PC-9 (cell line): ENCODE measurements at regions of chr4 and their contacts with region 1.

Region 1: GRCh38 chr4:186037692-186038658 is 31.0 kb upstream of the TLR3 start:
- DNase-seq: peak; percentile 40 to 65
- H3K4me3 ChIP-seq: no peak overlapping the region
- H3K27ac ChIP-seq: no peak overlapping the region
- H3K4me1 ChIP-seq: no peaks in the 10 kb centered on the region
- H3K27me3 ChIP-seq: no peaks in the 10 kb centered on the region
- CTCF ChIP-seq: peak; percentile 80

Region 2: DNA sequence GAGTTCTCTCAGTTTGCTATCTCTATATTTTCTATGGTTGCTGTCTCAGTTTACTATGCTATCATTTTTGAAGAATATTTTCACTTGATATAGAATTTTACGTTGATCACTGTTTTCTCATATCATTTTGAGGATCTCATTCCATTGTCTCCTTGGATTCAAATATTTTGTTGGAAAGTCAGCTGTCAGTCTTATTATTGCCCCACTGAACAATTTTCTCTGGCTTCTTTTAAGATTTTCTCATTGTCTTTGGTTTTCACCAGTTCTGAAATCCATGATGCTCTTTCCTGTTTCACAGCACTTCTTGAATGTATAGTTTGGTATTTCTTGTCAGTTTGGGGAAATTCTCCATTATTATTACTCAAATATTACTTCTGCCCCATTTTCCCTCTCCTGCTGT is 1901.5 kb before region 1 on chr4:
- CTCF ChIA-PET with region 1: no interaction called
- POLR2A ChIA-PET with region 1: no interaction called
- intact Hi-C with region 1: loop called (anchors 10 kb)
- DNase-seq: no peak
- H3K4me3 ChIP-seq: no peak overlapping the region
- H3K27ac ChIP-seq: no peak overlapping the region
- H3K4me1 ChIP-seq: no peaks in the 10 kb centered on the region
- H3K27me3 ChIP-seq: no peaks in the 10 kb centered on the region; the same call in 1 of the 2 replicates
- CTCF ChIP-seq: no peak

Region 3: DNA sequence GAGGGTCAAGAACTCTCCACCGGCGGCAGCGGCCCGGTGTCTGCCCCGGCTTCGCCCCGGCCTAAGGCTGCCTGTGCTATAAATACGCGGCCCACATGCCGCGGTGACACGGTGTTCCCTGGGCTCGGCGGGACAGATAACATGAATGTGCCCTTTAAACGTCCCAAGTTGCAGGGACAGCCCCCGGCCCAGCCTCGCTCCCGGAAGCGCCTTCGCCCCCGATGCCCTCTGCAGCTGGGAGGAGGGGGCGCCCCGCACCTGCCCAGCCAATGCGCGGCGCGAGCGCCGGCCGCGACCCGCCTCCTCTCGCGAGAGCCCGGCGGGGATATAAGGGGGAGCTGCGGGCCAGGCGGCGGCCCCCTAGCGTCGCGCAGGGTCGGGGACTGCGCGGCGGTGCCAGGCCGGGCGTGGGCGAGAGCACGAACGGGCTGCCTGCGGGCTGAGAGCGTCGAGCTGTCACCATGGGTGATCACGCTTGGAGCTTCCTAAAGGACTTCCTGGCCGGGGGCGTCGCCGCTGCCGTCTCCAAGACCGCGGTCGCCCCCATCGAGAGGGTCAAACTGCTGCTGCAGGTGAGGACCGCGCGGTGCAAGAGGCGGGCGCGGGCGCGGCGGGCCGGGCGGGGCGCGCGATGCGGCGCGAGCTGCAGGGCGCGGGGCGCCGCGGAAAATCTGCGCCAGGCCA is 894.9 kb before region 1 on chr4 and contains the start of gene SLC25A4:
- CTCF ChIA-PET with region 1: no interaction called
- POLR2A ChIA-PET with region 1: no interaction called
- intact Hi-C with region 1: loop called (anchors 10 kb)
- DNase-seq: peak; percentile 37 to 81
- H3K4me3 ChIP-seq: peak within 1 kb of the TSS; percentile 71
- H3K27ac ChIP-seq: no peak within 1 kb of the TSS
- H3K4me1 ChIP-seq: peaks cover 8% of the 10 kb centered on the region; the same call in 1 of the 2 replicates
- H3K27me3 ChIP-seq: no peaks in the 10 kb centered on the region
- CTCF ChIP-seq: no peak; the same call in 1 of the 2 replicates
- total RNA-seq, gene SLC25A4: 15.6 and 15.9 TPM in 2 replicates

Region 4: GRCh38 chr4:185183619-185184281 is 854.2 kb before region 1 on chr4:
- CTCF ChIA-PET with region 1: interaction called, 5 read pairs
- POLR2A ChIA-PET with region 1: no interaction called
- intact Hi-C with region 1: loop called (anchors 10 kb)
- DNase-seq: peak; percentile 46 to 61
- H3K4me3 ChIP-seq: no peak overlapping the region
- H3K27ac ChIP-seq: no peak overlapping the region
- H3K4me1 ChIP-seq: no peaks in the 10 kb centered on the region
- H3K27me3 ChIP-seq: no peaks in the 10 kb centered on the region
- CTCF ChIP-seq: peak; percentile 73

Region 5: DNA sequence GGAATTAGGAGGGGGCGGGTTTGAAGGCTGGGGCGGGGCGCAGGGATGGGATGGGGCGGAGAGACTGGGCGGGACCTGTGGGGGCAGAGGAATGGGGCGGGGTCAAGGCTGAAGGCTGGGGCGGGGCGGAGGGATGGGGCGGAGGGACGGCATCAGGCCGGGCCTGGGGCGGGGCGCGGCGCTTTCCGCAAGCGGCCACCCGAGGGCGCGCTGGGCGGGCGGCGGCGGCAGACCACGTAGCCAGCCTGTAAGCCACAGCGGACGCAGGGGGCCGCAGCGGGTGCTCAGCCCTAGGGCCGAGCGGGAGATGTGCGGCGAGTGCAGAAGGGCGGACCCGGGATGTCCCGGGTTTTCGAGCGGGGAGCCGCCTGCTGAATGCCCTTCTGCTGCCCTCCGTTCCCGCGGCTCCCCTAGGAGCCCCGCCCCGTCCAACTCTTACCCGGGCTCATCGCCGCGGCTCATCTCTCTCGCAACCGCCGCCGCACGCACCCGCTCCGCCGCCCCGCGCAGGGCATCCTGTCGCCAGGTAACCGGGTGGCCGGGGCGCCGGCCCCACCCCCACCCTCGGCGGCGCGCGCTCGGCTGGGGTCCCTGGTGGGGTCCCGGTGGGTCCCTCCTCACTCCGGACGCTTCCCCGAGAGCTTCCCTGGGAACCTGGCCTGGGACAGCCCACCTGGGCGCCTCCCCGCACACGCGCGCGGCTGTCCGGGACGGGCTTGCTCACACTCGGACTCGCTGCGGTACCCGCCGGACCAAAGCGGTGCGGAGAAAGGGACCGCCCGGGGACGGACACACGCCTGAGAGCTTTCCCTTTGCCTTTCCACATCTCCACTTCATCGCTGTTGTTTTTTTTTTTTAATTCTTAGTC is 566.5 kb before region 1 on chr4 and contains the start of gene CCDC110:
- CTCF ChIA-PET with region 1: no interaction called
- POLR2A ChIA-PET with region 1: no interaction called
- intact Hi-C with region 1: loop called (anchors 5 kb)
- DNase-seq: peak; percentile 46 to 91
- H3K4me3 ChIP-seq: peak within 1 kb of the TSS; percentile 73
- H3K27ac ChIP-seq: no peak within 1 kb of the TSS
- H3K4me1 ChIP-seq: 0 out of 2 replicates have a peak, but pooled peaks cover 4% of the 10 kb centered on the region
- H3K27me3 ChIP-seq: no peaks in the 10 kb centered on the region
- CTCF ChIP-seq: peak; percentile 52; the same call in 1 of the 2 replicates
- total RNA-seq, gene CCDC110: 2.1 and 4.3 TPM in 2 replicates

Region 6: GRCh38 chr4:185640811-185641675 is 396.9 kb before region 1 on chr4:
- CTCF ChIA-PET with region 1: interaction called, 7 read pairs
- POLR2A ChIA-PET with region 1: no interaction called
- intact Hi-C with region 1: loop called (anchors 1 kb)
- DNase-seq: peak in 1 of 2 experiments; percentile 38
- H3K4me3 ChIP-seq: no peak overlapping the region
- H3K27ac ChIP-seq: no peak overlapping the region
- H3K4me1 ChIP-seq: no peaks in the 10 kb centered on the region
- H3K27me3 ChIP-seq: no peaks in the 10 kb centered on the region
- CTCF ChIP-seq: peak; percentile 67

Region 7: GRCh38 chr4:186021461-186022167 is 16.4 kb before region 1 on chr4:
- CTCF ChIA-PET with region 1: interaction called, 13 read pairs
- POLR2A ChIA-PET with region 1: no interaction called
- intact Hi-C with region 1: no loop called
- DNase-seq: peak in 1 of 2 experiments; percentile 25
- H3K4me3 ChIP-seq: no peak overlapping the region
- H3K27ac ChIP-seq: no peak overlapping the region
- H3K4me1 ChIP-seq: no peaks in the 10 kb centered on the region
- H3K27me3 ChIP-seq: no peaks in the 10 kb centered on the region
- CTCF ChIP-seq: peak; percentile 58

Region 8: DNA sequence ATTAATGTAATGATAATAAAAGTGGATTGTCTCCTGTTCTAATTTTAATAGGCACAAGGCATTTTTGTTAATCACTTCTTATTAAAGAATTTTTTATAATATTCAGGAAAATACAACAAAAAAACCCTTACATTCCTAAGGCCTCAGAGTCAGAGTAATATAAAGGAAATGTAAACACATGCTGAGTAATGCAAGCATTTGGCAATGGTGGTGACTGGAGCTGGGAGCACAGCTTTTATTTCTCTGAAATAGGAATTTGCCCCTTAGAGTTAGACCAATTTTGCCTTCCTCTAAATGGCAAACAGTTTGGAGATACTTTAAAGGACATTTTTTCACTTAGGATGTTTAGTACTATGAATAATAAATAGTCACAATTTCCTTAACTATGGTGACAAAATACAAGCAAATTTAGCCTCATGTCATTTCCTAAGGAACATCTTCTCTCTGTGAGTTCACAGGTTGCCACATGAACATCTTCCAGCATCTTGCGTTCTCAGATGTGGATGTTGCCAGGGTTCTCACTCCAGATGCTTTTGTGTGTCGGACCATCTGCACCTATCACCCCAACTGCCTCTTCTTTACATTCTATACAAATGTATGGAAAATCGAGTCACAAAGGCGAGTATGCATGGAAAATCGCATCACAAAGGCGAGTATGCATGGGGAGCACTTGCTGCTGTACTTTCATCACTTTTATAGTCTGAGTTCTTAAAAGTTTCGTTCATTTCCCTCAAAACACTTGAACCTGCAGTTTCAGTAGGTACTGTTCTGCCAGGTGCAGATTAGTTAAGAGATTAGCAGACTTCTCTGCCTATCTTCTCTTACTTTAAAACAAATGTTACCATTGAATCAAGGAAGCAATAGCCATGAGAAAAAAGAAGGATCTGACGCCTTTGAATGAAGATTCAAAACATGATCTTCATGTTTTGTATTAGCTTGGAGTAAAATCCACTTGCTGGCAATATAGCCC is 212.1 kb after region 1 on chr4:
- CTCF ChIA-PET with region 1: no interaction called
- POLR2A ChIA-PET with region 1: no interaction called
- intact Hi-C with region 1: no loop called
- DNase-seq: no peak
- H3K4me3 ChIP-seq: no peak overlapping the region
- H3K27ac ChIP-seq: no peak overlapping the region
- H3K4me1 ChIP-seq: no peaks in the 10 kb centered on the region
- H3K27me3 ChIP-seq: peaks cover 31% of the 10 kb centered on the region; the same call in 1 of the 2 replicates
- CTCF ChIP-seq: no peak